K562 (cell line): ENCODE measurements at regions of chr9 and their contacts with region 1.

Region 1: DNA sequence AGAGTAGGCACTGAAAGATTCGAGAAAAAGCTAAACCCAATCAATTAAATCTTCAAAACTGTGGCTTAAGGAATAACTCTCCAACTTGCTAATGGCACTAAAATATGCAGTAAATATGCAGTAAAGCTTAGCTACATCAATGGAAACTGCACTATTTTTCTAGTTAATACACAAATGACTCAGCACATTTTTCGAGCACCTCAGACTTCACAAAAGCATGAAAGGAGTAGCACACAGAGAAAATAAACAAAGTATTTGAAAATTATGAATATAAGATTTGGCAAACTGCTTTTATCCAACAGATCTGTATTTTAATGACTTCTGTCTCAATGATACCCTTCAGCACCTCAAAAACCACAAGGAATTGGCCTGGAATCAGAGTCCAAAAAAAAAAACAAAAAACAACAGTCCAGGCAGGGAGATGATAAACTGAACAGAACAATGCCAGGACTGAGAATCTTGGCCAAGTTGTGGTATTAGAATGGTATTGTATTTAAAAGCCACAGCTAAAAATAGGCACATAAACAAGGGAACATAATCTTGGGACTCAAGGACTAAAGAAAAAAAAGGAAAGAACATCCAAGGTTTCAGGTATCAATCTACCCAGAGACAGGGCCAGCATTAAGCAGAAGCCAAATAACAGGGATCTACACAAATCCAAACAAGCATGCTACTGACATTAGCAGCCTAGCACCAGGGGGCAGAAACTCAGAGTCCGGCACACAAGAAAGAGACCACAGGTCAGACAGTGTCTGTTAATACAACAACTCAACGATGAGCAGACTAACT is 21.4 kb downstream of the TMEM245 start:
- DNase-seq: peak; percentile 24 to 61 (median 34)
- ATAC-seq: peak; percentile 87
- H3K4me3 ChIP-seq: no peak overlapping the region
- H3K27ac ChIP-seq: peak overlapping the region; percentile 62
- H3K4me1 ChIP-seq: peaks cover 0 to 31% of the 10 kb centered on the region in 2 experiments; a peak in 4 of 5 replicates
- H3K27me3 ChIP-seq: no peaks in the 10 kb centered on the region
- CTCF ChIP-seq: peak in 2 of 3 experiments; percentile 50 to 54; a peak in 5 of 6 replicates
- EP300 ChIP-seq: 0 out of 2 replicates have a peak, but pooled peaks have one; percentile 18
- POLR2A ChIP-seq: no peak
- RAD21 ChIP-seq: peak; percentile 19 to 59; a peak in 3 of 4 replicates

Region 2: DNA sequence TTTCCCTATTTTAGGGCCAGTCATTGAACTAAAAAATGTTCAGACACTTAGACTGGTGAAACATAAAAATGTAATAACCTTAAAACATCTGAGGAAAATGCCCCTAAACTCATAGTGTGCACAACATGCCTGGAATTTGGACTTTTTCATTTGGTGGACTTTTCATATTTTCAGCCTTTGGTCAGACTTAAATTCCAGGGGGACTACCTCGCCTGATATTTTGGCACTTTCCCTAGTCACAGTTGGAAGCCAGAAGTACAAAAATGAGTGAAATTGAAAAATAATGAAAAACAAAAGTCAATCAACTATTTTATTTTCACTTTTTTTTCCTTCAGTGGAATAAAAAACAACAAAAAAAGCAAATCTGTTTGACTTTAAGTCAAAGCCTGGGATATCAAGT is 498.8 kb before region 1 on chr9:
- CTCF ChIA-PET with region 1: no interaction called
- POLR2A ChIA-PET with region 1: no interaction called
- in situ Hi-C with region 1: no loop called
- intact Hi-C with region 1: no loop called
- DNase-seq: no peak
- ATAC-seq: no peak
- H3K4me3 ChIP-seq: no peak overlapping the region
- H3K27ac ChIP-seq: no peak overlapping the region
- H3K4me1 ChIP-seq: no peaks in the 10 kb centered on the region
- H3K27me3 ChIP-seq: no peaks in the 10 kb centered on the region
- CTCF ChIP-seq: no peak
- EP300 ChIP-seq: no peak
- POLR2A ChIP-seq: no peak
- RAD21 ChIP-seq: no peak

Region 3: DNA sequence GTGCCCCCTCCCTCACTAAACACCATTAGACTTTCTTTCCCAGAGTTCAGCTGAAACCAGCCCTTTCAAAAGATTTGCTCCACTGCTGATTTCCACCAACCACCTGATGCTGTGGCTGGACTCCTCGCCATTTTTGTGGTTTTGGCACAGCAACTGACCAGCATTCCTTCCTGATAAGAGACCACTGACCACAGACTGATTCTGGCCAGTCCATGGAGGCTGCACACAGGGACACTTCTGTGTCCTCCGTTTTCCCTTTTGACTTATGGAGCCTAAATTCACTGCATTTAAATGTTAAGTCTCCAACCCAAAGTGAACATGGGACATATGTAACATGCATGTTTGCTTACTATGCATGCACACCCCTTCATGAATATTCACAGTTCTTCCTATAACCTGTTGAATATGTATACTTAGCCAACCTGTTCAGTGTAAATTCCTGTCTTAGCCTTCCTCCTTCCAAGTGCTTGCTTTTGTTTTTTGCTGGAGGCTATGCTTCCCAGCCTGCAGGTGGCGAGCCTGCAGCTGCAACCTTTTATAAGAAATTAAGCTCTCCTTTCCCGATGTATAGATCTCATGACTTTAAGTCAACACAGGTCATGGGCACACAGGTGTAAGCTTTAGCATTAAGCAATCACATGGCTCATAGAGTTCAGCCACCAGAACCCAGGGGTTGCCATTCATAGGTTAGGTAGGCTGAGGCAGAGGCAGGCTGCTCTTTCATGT is 321.3 kb before region 1 on chr9:
- CTCF ChIA-PET with region 1: no interaction called
- POLR2A ChIA-PET with region 1: no interaction called
- in situ Hi-C with region 1: no loop called
- intact Hi-C with region 1: no loop called
- DNase-seq: peak in 1 of 4 experiments; percentile 16
- ATAC-seq: peak; percentile 69
- H3K4me3 ChIP-seq: no peak overlapping the region
- H3K27ac ChIP-seq: no peak overlapping the region
- H3K4me1 ChIP-seq: no peaks in the 10 kb centered on the region; a peak in 1 of 5 replicates
- H3K27me3 ChIP-seq: peaks cover 10 to 50% of the 10 kb centered on the region in 2 experiments; a peak in 4 of 5 replicates
- CTCF ChIP-seq: peak in 1 of 3 experiments; percentile 24; a peak in 1 of 6 replicates
- EP300 ChIP-seq: no peak
- POLR2A ChIP-seq: no peak
- RAD21 ChIP-seq: no peak

Region 4: DNA sequence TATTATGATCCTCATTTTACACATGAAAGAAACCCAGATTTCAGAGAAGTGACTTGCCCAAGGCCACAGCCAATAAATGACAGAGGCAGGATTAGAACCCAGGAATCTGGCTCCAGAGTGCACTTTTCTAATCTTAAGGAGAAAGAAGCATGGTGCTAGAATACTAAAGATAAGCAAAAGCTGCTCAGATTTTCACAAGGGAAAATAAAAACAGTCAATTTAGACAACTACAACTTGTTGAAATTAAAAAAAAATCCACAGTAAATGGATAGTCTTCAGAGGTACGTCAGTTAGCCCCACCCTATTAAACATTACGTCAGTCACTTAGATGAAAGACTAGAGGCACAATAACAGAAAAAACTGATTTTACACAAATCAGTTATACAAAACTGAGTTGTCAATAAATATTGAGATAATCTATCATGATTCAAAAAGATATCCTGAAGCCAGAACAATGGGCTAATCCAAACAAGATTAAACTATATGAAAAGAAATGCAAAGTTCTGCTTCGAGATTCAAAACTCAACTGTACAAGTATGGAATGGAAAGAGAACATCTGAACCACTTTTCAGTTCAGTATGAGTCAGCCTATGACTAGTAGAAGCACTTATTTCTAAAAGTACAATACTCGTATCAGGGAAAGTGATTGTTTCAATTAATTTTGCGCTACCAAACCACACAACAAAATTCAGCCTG is 12.1 kb after region 1 on chr9:
- CTCF ChIA-PET with region 1: interaction called, 3 read pairs
- POLR2A ChIA-PET with region 1: interaction called, 11 read pairs
- in situ Hi-C with region 1: no loop called
- intact Hi-C with region 1: no loop called
- DNase-seq: no peak
- ATAC-seq: no peak
- H3K4me3 ChIP-seq: no peak overlapping the region
- H3K27ac ChIP-seq: peak overlapping the region; percentile 20; the same call in 1 of the 3 replicates
- H3K4me1 ChIP-seq: peaks cover 19 to 43% of the 10 kb centered on the region in 2 experiments
- H3K27me3 ChIP-seq: no peaks in the 10 kb centered on the region
- CTCF ChIP-seq: no peak
- EP300 ChIP-seq: no peak
- POLR2A ChIP-seq: no peak
- RAD21 ChIP-seq: no peak

Region 5: GRCh38 chr9:109132567-109133021 is 34.2 kb after region 1 on chr9:
- CTCF ChIA-PET with region 1: no interaction called
- POLR2A ChIA-PET with region 1: no interaction called
- in situ Hi-C with region 1: no loop called
- intact Hi-C with region 1: loop called (anchors 1 kb)
- DNase-seq: peak; percentile 35 to 71 (median 45)
- ATAC-seq: peak; percentile 78
- H3K4me3 ChIP-seq: no peak overlapping the region
- H3K27ac ChIP-seq: peak overlapping the region; percentile 63
- H3K4me1 ChIP-seq: peaks cover 7 to 40% of the 10 kb centered on the region in 2 experiments; a peak in 4 of 5 replicates
- H3K27me3 ChIP-seq: no peaks in the 10 kb centered on the region
- CTCF ChIP-seq: peak in 2 of 3 experiments; percentile 24 to 46; a peak in 3 of 6 replicates
- EP300 ChIP-seq: peak; percentile 80
- POLR2A ChIP-seq: no peak
- RAD21 ChIP-seq: peak; percentile 39 to 66; a peak in 3 of 4 replicates

Region 6: GRCh38 chr9:109182940-109183798 is 84.8 kb after region 1 on chr9:
- CTCF ChIA-PET with region 1: no interaction called
- POLR2A ChIA-PET with region 1: no interaction called
- in situ Hi-C with region 1: no loop called
- intact Hi-C with region 1: loop called (anchors 5 kb)
- DNase-seq: peak; percentile 40 to 71 (median 56)
- ATAC-seq: peak; percentile 93
- H3K4me3 ChIP-seq: no peak overlapping the region
- H3K27ac ChIP-seq: no peak overlapping the region
- H3K4me1 ChIP-seq: no peaks in the 10 kb centered on the region; a peak in 3 of 5 replicates
- H3K27me3 ChIP-seq: no peaks in the 10 kb centered on the region; a peak in 1 of 5 replicates
- CTCF ChIP-seq: peak; percentile 59 to 88 (median 69)
- EP300 ChIP-seq: no peak
- POLR2A ChIP-seq: no peak
- RAD21 ChIP-seq: peak; percentile 3 to 21; a peak in 1 of 4 replicates

Region 7: DNA sequence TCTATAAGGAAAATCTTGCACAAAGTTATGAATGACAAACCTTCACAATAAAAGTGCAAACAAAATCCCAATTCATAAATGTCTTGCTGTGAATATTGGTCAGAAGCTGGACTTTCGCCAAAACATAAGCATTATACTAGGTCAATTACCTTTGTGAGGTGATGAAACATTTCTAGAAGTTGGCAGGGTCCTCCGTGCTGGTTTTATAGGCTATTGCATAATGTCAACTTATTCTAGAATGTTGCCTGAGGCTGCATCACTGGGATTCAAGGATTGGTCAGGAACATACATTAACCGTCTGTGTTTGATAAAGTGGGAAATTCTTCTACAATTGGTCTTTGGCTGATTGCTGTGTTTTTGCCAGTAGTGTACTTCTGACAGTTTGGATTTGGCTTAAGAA is 631.9 kb after region 1 on chr9:
- CTCF ChIA-PET with region 1: no interaction called
- POLR2A ChIA-PET with region 1: no interaction called
- in situ Hi-C with region 1: no loop called
- intact Hi-C with region 1: no loop called
- DNase-seq: no peak
- ATAC-seq: no peak
- H3K4me3 ChIP-seq: no peak overlapping the region
- H3K27ac ChIP-seq: no peak overlapping the region
- H3K4me1 ChIP-seq: no peaks in the 10 kb centered on the region
- H3K27me3 ChIP-seq: no peaks in the 10 kb centered on the region
- CTCF ChIP-seq: no peak
- EP300 ChIP-seq: no peak
- POLR2A ChIP-seq: no peak
- RAD21 ChIP-seq: no peak